AG04450 (cell line): ENCODE measurements at regions of chr6 and their contacts with region 1.

Region 1: GRCh38 chr6:151323791-151324487 is 67.4 kb downstream of the ZBTB2 start:
- DNase-seq: peak; percentile 70
- H3K4me3 ChIP-seq: peak overlapping the region; percentile 14; the same call in 1 of the 2 replicates
- H3K27ac ChIP-seq: peak overlapping the region; percentile 47
- H3K27me3 ChIP-seq: no peaks in the 10 kb centered on the region
- CTCF ChIP-seq: peak; percentile 94

Region 2: DNA sequence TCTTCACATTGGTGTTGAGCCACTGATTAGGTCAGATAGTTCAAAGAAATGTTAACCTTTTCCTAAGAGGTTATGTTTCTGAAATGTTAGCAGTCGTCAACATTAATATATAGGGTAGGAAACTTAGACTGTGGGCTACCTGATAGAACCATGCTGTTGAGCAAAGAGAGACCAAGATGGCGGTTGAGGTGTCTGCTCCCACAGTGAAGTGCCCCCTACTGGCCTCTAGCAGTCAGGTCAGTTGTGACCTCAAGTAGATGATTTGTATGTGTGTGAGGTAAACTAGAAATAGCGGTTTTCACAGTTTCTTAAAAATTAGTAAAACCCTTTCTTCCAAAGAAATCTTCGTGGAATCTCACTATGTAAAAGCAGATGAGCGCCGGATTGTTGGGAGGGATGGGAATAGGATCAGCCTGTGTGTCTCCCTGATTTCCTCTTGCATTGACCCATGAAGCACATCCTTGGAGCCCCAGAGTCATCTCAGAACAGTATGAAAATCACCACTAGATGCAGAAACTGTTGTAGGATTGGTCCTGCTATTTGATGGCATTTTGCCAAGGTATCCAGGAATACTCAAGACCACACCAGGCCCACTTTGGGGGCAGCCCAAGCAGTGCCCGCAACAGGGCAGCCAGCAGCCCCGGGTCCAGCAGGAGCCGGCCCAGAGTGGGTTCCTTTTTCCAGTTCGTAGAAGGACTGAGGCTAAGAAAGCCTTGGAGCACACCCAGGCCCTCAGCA is 418.0 kb before region 1 on chr6:
- CTCF ChIA-PET with region 1: interaction called, 22 read pairs
- POLR2A ChIA-PET with region 1: no interaction called
- DNase-seq: no peak
- H3K4me3 ChIP-seq: no peak overlapping the region
- H3K27ac ChIP-seq: no peak overlapping the region
- H3K27me3 ChIP-seq: no peaks in the 10 kb centered on the region
- CTCF ChIP-seq: peak; percentile 29; the same call in 1 of the 2 replicates

Region 3: DNA sequence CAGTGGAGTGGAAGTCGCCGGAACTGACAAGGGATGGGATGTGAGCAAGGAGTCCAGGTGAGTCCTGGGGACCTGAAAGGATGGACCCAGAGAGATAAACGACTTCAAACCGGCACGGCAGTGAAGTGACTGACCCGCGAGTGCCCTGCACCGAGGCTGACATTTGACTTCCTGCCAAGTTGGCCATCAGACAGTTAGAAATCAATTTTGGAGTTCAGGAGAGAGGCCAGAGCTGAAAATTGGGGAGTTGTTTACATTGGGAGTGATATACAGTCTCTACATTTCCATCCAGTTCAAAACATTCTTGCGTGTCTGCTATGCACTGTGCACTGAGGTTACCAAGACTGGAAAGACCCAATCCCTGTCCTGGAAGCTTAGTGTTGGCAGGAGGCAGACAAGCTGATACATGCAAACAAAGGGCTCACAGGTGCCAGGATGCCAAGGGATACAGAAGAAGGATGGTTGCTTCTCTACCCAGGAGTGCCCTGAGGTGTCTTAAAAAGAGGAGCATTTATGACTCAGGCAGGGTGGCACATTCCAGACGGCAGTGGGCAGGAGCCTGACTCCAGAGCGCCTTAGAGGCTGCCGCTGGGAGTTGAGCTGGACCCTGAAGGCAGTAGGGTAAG is 271.8 kb before region 1 on chr6:
- CTCF ChIA-PET with region 1: interaction called, 14 read pairs
- POLR2A ChIA-PET with region 1: no interaction called
- DNase-seq: no peak
- H3K4me3 ChIP-seq: no peak overlapping the region
- H3K27ac ChIP-seq: no peak overlapping the region
- H3K27me3 ChIP-seq: no peaks in the 10 kb centered on the region
- CTCF ChIP-seq: no peak

Region 4: GRCh38 chr6:151082079-151082478 is 241.9 kb before region 1 on chr6:
- CTCF ChIA-PET with region 1: interaction called, 12 read pairs
- POLR2A ChIA-PET with region 1: no interaction called
- DNase-seq: no peak
- H3K4me3 ChIP-seq: no peak overlapping the region
- H3K27ac ChIP-seq: no peak overlapping the region
- H3K27me3 ChIP-seq: no peaks in the 10 kb centered on the region
- CTCF ChIP-seq: no peak

Region 5: GRCh38 chr6:151111670-151112069 is 212.3 kb before region 1 on chr6:
- CTCF ChIA-PET with region 1: interaction called, 13 read pairs
- POLR2A ChIA-PET with region 1: interaction called, 3 read pairs
- DNase-seq: no peak
- H3K4me3 ChIP-seq: no peak overlapping the region
- H3K27ac ChIP-seq: no peak overlapping the region
- H3K27me3 ChIP-seq: peaks cover 29% of the 10 kb centered on the region
- CTCF ChIP-seq: no peak

Region 6: GRCh38 chr6:151263967-151264366 is 60.0 kb before region 1 on chr6:
- CTCF ChIA-PET with region 1: interaction called, 21 read pairs
- POLR2A ChIA-PET with region 1: no interaction called
- DNase-seq: no peak
- H3K4me3 ChIP-seq: no peak overlapping the region
- H3K27ac ChIP-seq: no peak overlapping the region
- H3K27me3 ChIP-seq: no peaks in the 10 kb centered on the region
- CTCF ChIP-seq: no peak

Region 7: GRCh38 chr6:151335930-151336329 is 12.0 kb after region 1 on chr6:
- CTCF ChIA-PET with region 1: interaction called, 38 read pairs
- POLR2A ChIA-PET with region 1: interaction called, 5 read pairs
- DNase-seq: no peak
- H3K4me3 ChIP-seq: no peak overlapping the region
- H3K27ac ChIP-seq: no peak overlapping the region
- H3K27me3 ChIP-seq: no peaks in the 10 kb centered on the region
- CTCF ChIP-seq: no peak

Region 8: DNA sequence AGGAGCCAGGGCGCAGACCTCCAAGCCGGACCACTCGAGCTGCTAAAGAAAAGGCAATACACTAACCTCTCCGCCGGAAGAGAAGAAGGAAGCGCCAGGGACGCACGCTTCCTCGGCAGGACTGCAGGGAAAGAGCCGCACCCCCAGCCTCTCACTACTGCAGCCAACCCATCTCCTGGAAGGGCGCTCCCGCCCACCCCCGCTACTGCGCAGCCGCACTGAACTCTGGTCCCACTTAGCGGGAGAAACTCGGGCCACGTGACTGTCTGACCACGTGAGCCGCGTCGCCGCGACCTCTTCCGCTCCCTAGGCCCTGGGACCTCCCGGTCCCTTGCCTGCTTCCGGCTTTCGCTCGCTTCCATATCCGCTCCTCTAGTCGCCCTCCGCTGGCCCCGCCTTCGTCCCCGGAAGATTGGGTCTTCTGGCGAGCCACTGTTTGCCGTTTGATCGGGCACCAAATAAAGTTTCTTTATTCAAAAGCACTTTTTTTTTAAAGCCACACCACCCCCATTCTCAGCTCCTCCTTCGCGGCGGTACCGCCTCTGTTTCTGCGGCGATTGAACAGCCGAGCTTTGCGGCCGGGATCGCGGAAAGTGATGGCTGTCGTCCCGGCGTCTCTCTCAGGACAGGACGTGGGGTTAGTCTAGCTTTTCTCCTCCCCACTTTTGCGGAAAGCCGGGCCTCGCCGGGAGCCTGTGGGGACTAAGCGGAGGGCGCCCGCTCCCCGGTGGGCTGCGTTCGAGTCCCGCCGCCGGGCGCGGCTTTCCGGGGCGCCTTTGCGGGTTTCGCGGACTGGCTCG is 128.2 kb after region 1 on chr6 and contains the start of gene RMND1:
- CTCF ChIA-PET with region 1: no interaction called
- POLR2A ChIA-PET with region 1: no interaction called
- DNase-seq: peak; percentile 100
- H3K4me3 ChIP-seq: peak within 1 kb of the TSS; percentile 96
- H3K27ac ChIP-seq: peak within 1 kb of the TSS; percentile 77
- H3K27me3 ChIP-seq: no peaks in the 10 kb centered on the region
- CTCF ChIP-seq: no peak
- polyA plus RNA-seq, gene RMND1: 24.3 and 27.8 TPM in 2 replicates